Tibial artery (tissue), 4 donors: ENCODE measurements at regions of chr10 and their contacts with region 1.

Region 1: GRCh38 chr10:71761541-71762394 is 11.6 kb downstream of the VSIR start:
- DNase-seq: no peak
- H3K4me3 ChIP-seq: no peak overlapping the region
- H3K27ac ChIP-seq: no peak overlapping the region
- H3K4me1 ChIP-seq: peaks cover 7 to 63% (median 48%) of the 10 kb centered on the region in 4 donors
- H3K27me3 ChIP-seq: no peaks in the 10 kb centered on the region
- CTCF ChIP-seq: no peak

Region 2: GRCh38 chr10:71684356-71685173 is 77.2 kb before region 1 on chr10:
- intact Hi-C with region 1: no loop called
- DNase-seq: no peak
- H3K4me3 ChIP-seq: no peak overlapping the region
- H3K27ac ChIP-seq: no peak overlapping the region
- H3K4me1 ChIP-seq: no peaks in the 10 kb centered on the region
- H3K27me3 ChIP-seq: peaks cover 0 to 7% of the 10 kb centered on the region in 2 donors
- CTCF ChIP-seq: no peak

Region 3: DNA sequence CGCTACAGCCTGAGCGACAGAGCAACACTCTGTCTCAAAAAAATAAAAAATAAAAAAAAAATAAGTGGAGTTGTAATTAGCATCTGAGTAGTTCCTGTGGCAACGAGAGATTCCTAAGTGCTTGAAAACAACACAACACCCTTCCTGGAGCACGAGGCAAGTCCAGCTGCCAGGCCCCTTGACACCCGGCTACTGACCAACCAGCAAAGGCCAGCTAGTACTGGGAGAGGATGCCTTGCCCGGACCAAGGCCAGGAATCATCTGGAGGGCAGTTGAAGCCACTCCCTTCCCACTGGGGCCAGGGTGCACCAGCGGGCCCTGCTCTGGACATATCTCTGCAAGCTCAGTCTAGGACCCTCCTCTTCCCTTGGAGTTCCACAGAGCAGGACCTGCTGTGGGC is 42.7 kb before region 1 on chr10:
- intact Hi-C with region 1: loop called (anchors 5 kb)
- DNase-seq: peak; percentile 85 to 90
- H3K4me3 ChIP-seq: no peak overlapping the region
- H3K27ac ChIP-seq: peak overlapping the region; percentile 53 to 61
- H3K4me1 ChIP-seq: peaks cover 3 to 51% (median 40%) of the 10 kb centered on the region in 4 donors
- H3K27me3 ChIP-seq: no peaks in the 10 kb centered on the region
- CTCF ChIP-seq: no peak